ENCODE measurements at regions of chr3 and their contacts with region 1.

Region 1: GRCh38 chr3:42880601-42881451 is 5.1 kb upstream of the CYP8B1 start:
- DNase-seq: peak; percentile 77 to 97
- H3K4me3 ChIP-seq: peak overlapping the region; percentile 43
- CTCF ChIP-seq: peak in 1 of 3 donors; percentile 14
- POLR2A ChIP-seq: no peak

Region 2: GRCh38 chr3:42780892-42781700 is 99.7 kb before region 1 on chr3:
- intact Hi-C with region 1: loop called (anchors 5 kb)
- DNase-seq: peak in 1 of 2 donors; percentile 57
- H3K4me3 ChIP-seq: no peak overlapping the region
- CTCF ChIP-seq: peak in 1 of 3 donors; percentile 78
- POLR2A ChIP-seq: no peak

Region 3: GRCh38 chr3:42829083-42829627 is 51.7 kb before region 1 on chr3:
- intact Hi-C with region 1: loop called (anchors 5 kb)
- DNase-seq: no peak
- H3K4me3 ChIP-seq: no peak overlapping the region
- CTCF ChIP-seq: no peak
- POLR2A ChIP-seq: no peak

Region 4: DNA sequence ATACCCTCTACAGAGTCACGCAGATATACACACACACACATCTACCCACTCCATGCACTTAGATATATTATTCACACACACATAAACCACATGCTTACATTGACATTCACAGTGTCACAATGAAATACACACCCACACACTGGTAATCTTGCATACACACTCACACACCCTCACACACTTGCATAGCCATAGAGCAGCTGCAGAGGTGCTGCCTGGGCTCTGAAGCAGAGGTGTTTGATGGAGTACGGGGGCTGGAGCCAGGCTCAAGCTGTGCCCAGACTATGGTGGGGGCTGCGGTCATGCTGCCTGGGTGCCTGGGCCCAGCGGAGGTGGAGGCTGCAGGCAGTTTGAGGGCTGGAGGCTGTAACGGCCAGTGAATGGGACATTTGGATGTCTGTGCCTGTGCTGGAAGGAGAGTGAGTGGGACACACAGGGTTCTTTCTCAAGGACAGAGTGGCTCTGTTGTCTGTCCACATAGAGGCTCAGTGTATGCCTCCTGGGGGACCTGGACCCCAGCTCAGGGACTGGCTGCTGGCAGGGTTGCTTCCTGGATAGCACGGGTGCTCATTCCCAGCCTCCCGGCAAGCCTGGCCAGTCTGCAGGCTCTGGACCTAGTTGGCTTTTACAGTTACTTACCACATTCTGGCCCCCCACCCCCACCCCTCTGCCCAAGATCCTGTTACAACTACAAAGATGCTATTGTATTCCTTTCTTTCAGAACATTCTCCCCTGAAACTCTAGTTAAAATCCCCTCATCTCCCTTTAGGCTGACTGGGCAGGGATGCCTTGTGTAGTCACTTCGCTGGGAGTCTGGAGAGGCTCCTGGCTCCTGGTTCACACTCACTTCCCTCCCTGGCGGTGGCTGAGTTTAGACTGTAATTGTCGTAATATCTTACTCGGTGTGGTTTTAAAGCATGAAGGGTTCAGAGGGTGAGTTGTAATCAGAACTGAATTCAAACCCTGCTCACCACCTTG is 110.8 kb after region 1 on chr3:
- intact Hi-C with region 1: no loop called
- DNase-seq: peak in 1 of 2 donors; percentile 79
- H3K4me3 ChIP-seq: no peak overlapping the region
- CTCF ChIP-seq: no peak
- POLR2A ChIP-seq: no peak

Region 5: GRCh38 chr3:43105596-43106292 is 224.9 kb after region 1 on chr3 and contains the start of gene POMGNT2:
- intact Hi-C with region 1: no loop called
- DNase-seq: peak; percentile 83 to 97
- H3K4me3 ChIP-seq: peak within 1 kb of the TSS; percentile 74
- CTCF ChIP-seq: no peak
- POLR2A ChIP-seq: no peak
- total RNA-seq, gene POMGNT2: 16.5 to 27.6 (median 23.5) TPM

Measured in lower leg skin (tissue), 4 donors.